IMR-90 (cell line): ENCODE measurements at regions of chr14 and their contacts with region 1.

Region 1: DNA sequence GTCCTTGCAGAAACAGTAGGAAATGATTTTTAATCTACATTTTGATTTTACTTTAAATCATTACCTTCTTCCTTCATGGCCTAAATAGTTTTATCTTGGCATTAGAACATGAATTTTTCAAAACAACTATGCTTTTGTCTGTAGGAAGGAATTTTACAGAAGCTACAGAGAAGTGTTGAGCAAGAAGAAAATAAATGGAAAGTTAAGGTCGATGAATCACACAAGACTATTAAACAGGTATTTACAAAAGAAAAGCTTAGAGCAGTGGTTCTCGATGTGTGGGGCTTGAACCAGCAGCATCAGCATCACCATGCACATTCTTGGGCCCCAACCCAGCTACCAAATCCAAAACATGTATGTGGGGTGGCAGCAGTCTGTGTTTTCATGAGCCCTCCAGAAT is 91.6 kb downstream of the KTN1 start:
- DNase-seq: peak; percentile 37
- ATAC-seq: no peak
- H3K4me3 ChIP-seq: no peak overlapping the region
- H3K27ac ChIP-seq: no peak overlapping the region
- H3K4me1 ChIP-seq: no peaks in the 10 kb centered on the region
- H3K27me3 ChIP-seq: no peaks in the 10 kb centered on the region
- CTCF ChIP-seq: no peak
- POLR2A ChIP-seq: no peak
- RAD21 ChIP-seq: no peak

Region 2: DNA sequence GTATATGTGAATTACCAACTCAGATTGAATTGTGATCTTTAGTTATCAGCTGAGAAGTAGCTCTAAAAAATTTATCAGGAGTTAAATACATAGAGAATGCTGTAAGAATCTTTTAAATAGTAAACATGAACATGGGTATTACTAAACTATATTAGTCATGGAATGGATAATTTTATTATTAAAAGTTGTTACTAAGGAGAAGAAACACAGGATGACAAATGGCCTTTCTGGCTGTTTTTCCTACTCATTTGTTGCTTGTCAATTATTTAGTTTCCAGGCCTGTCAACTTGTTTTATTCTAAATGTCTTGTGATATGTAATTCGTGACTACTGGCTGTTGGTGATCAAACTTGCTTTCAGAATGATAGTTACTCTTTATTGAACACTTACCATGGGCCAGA is 33.0 kb before region 1 on chr14:
- CTCF ChIA-PET with region 1: no interaction called
- POLR2A ChIA-PET with region 1: no interaction called
- dilution Hi-C with region 1: no loop called
- in situ Hi-C with region 1: no loop called
- intact Hi-C with region 1: loop called (anchors 5 kb)
- DNase-seq: no peak
- ATAC-seq: no peak
- H3K4me3 ChIP-seq: no peak overlapping the region
- H3K27ac ChIP-seq: no peak overlapping the region
- H3K4me1 ChIP-seq: no peaks in the 10 kb centered on the region
- H3K27me3 ChIP-seq: no peaks in the 10 kb centered on the region
- CTCF ChIP-seq: no peak
- POLR2A ChIP-seq: no peak
- RAD21 ChIP-seq: no peak